HepG2 (cell line): ENCODE measurements at regions of chr12 and their contacts with region 1.

Region 1: DNA sequence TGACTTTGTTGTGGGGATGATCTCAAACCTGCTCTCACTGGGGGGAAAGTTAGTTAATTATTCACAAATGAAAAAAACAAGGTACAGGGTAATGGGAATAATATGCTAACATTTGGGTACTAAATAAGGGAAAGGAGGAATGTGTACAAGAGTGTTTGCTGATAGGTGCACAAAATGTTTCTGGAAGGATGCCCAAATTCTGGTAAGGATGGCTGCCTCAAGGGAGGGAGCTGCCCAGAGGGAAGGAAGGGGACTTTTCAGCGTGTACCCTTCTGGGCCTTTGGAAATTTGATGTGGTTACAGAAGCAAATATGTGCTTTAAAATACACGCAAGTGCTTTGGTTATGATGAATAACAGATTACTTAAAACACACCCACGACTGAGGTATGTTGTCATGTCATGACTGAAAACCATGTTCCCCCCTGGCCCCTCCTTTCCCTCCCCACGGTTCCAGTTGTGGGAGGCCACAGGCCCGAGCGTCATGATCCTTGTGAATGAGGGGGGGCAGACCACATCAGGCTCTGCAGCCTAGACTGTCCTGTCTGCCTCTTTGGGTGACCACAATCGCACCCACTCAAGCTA is 43.3 kb upstream of the PLEKHG6 start:
- DNase-seq: no peak
- ATAC-seq: no peak
- H3K4me3 ChIP-seq: no peak overlapping the region
- H3K27ac ChIP-seq: no peak overlapping the region
- H3K4me1 ChIP-seq: peaks cover 40% of the 10 kb centered on the region
- H3K27me3 ChIP-seq: peaks cover 0 to 5% of the 10 kb centered on the region in 2 experiments; a peak in 1 of 5 replicates
- CTCF ChIP-seq: no peak
- EP300 ChIP-seq: no peak
- POLR2A ChIP-seq: no peak
- RAD21 ChIP-seq: no peak

Region 2: GRCh38 chr12:6215932-6216494 is 51.2 kb before region 1 on chr12:
- CTCF ChIA-PET with region 1: no interaction called
- POLR2A ChIA-PET with region 1: no interaction called
- in situ Hi-C with region 1: no loop called
- intact Hi-C with region 1: no loop called
- DNase-seq: no peak
- ATAC-seq: no peak
- H3K4me3 ChIP-seq: no peak overlapping the region
- H3K27ac ChIP-seq: no peak overlapping the region
- H3K4me1 ChIP-seq: peaks cover 28% of the 10 kb centered on the region
- H3K27me3 ChIP-seq: peaks cover 3 to 8% of the 10 kb centered on the region in 2 experiments
- CTCF ChIP-seq: no peak
- EP300 ChIP-seq: no peak
- POLR2A ChIP-seq: no peak
- RAD21 ChIP-seq: no peak

Region 3: GRCh38 chr12:6230321-6231110 is 36.7 kb before region 1 on chr12:
- CTCF ChIA-PET with region 1: no interaction called
- POLR2A ChIA-PET with region 1: no interaction called
- in situ Hi-C with region 1: no loop called
- intact Hi-C with region 1: loop called (anchors 5 kb)
- DNase-seq: peak; percentile 92
- ATAC-seq: peak; percentile 76
- H3K4me3 ChIP-seq: 0 out of 6 replicates have a peak overlapping the region, but pooled peaks of 1 of the 3 experiments have one; percentile 8
- H3K27ac ChIP-seq: peak overlapping the region; percentile 69
- H3K4me1 ChIP-seq: peaks cover 97% of the 10 kb centered on the region
- H3K27me3 ChIP-seq: no peaks in the 10 kb centered on the region
- CTCF ChIP-seq: 0 out of 2 replicates have a peak, but pooled peaks have one; percentile 3
- EP300 ChIP-seq: peak in 1 of 2 experiments; percentile 59; a peak in 2 of 4 replicates
- POLR2A ChIP-seq: peak in 1 of 2 experiments; percentile 39; a peak in 2 of 4 replicates
- RAD21 ChIP-seq: peak; percentile 13; the same call in 1 of the 2 replicates